ENCODE measurements at regions of chr1 and their contacts with region 1.

Region 1: DNA sequence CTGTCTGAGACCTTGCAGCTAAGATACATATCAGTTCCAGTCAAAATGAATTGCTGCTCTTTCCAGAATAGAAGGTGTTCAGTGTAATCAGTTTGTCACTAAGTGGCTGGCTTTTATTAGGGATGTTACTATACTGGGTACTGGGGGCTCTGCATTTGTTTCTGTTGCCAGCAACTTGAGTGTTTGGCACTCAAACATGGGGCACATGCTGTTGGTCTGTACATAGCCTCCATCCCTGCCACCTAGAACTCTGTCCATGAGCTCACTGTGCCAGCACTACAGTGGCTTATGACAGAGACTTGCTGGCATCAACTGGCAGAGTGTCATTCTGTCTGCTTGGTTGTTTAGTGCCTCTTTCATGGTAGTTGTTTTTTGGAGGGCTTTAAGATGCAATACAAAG is 45.1 kb downstream of the RGSL1 start:
- DNase-seq: no peak
- CTCF ChIP-seq: no peak

Region 2: DNA sequence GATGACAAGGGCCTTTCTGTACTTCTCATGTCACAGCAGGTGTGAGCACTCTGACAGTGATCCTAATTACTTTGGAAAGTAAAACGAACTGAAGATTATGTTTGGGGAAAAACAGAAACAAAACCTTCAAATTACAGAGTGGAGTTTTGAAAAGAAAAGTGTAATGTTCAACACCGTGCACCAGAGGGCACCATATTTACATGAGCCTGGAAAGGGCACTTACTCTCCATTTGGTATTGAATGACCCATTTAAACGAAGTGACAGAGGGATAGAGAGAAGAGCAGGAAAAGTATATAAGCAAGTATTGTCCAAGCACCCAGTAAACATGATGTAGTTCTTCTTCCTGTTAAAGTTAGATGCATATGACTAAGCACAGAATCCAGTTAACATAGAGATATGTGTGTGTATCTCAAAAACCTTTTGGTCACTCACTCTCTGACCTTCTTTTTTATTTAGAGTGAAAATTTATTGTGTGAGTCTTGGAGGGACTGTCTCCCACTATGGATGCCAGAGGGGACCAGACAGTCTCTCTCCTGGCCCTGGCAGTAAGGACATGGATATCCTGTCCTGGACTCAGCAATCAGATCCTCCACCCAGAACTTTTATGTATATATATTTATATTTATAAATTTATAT is 48.9 kb before region 1 on chr1:
- CTCF ChIA-PET with region 1: no interaction called
- POLR2A ChIA-PET with region 1: no interaction called
- DNase-seq: peak; percentile 63
- CTCF ChIP-seq: peak; percentile 56

Region 3: DNA sequence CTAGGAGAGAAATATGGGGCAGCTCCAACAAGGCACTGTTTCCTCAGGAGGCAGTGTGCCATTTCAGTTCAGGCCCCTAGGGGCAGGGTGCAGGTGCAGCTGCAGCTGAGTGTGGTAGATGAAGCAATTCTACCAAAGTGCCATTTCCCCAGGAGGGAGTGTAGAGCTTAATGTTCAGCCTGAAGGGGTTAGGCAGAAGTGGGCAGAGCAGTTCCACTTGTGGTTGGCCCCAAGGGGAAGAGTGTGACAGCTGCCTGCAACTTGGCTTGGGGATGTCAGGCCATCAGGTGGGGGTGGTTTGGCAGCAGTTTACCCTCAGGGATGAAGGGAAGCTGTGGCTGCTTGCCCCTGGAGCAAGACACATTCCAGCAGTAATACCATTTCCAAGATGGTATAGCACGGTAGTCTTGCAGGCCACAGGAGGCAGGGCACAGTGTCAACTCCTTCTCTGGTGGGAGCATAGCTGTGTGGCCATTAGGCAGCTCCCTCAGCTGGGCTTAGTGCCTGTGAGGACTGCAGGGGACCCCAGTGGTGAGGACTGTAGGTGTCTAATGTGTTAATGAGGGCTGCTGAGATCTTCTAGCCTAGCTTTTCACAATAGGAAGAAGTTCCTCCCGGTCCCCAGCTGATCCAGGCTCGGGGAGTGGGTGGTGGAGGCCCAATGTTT is 10.3 kb before region 1 on chr1:
- CTCF ChIA-PET with region 1: interaction called, 17 read pairs
- POLR2A ChIA-PET with region 1: no interaction called
- DNase-seq: peak; percentile 40
- CTCF ChIP-seq: peak; percentile 31

Region 4: GRCh38 chr1:182533896-182534295 is 38.9 kb after region 1 on chr1:
- CTCF ChIA-PET with region 1: no interaction called
- POLR2A ChIA-PET with region 1: no interaction called
- DNase-seq: no peak
- CTCF ChIP-seq: no peak